ENCODE measurements at regions of chr7 and their contacts with region 1.

Region 1: GRCh38 chr7:132666071-132666774 is 90.0 kb upstream of the PLXNA4 start:
- DNase-seq: peak; percentile 43
- H3K4me3 Mint-ChIP-seq: no peak overlapping the region
- H3K27ac Mint-ChIP-seq: peak overlapping the region; percentile 77
- H3K4me1 Mint-ChIP-seq: peaks cover 12% of the 10 kb centered on the region
- H3K27me3 Mint-ChIP-seq: no peaks in the 10 kb centered on the region

Region 2: GRCh38 chr7:132625651-132626050 is 40.6 kb before region 1 on chr7:
- CTCF ChIA-PET with region 1: no interaction called
- DNase-seq: no peak
- H3K4me3 Mint-ChIP-seq: no peak overlapping the region
- H3K27ac Mint-ChIP-seq: no peak overlapping the region
- H3K4me1 Mint-ChIP-seq: no peaks in the 10 kb centered on the region
- H3K27me3 Mint-ChIP-seq: peaks cover 5% of the 10 kb centered on the region

Region 3: DNA sequence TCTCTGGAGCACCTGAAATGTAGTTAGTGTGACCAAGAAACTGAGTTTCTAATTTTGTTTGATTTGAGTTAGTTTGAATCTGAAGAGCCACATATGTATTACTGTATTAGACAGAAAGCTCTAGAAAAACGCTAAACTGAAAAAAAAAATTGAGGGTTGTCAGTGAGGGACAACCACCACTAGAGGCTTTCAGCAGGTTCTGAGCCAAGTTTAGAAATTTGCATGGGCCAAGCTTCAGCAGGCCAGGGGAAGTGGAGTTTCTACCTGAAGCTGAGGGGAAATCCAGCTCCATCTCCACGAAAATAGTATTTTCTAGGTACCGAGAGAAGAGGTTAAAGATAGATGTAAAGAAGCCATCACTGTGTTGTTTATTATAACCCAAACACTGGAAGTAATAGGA is 12.1 kb before region 1 on chr7:
- CTCF ChIA-PET with region 1: interaction called, 22 read pairs
- DNase-seq: peak; percentile 30
- H3K4me3 Mint-ChIP-seq: no peak overlapping the region
- H3K27ac Mint-ChIP-seq: peak overlapping the region; percentile 38
- H3K4me1 Mint-ChIP-seq: peaks cover 41% of the 10 kb centered on the region
- H3K27me3 Mint-ChIP-seq: no peaks in the 10 kb centered on the region